ENCODE measurements at regions of chr7 and their contacts with region 1.

Region 1: GRCh38 chr7:332646-333392 is 42.8 kb downstream of the FOXL3 start:
- DNase-seq: peak; percentile 94
- H3K4me3 Mint-ChIP-seq: no peak overlapping the region
- H3K27ac Mint-ChIP-seq: no peak overlapping the region
- H3K4me1 Mint-ChIP-seq: peaks cover 7% of the 10 kb centered on the region
- H3K27me3 Mint-ChIP-seq: no peaks in the 10 kb centered on the region

Region 2: DNA sequence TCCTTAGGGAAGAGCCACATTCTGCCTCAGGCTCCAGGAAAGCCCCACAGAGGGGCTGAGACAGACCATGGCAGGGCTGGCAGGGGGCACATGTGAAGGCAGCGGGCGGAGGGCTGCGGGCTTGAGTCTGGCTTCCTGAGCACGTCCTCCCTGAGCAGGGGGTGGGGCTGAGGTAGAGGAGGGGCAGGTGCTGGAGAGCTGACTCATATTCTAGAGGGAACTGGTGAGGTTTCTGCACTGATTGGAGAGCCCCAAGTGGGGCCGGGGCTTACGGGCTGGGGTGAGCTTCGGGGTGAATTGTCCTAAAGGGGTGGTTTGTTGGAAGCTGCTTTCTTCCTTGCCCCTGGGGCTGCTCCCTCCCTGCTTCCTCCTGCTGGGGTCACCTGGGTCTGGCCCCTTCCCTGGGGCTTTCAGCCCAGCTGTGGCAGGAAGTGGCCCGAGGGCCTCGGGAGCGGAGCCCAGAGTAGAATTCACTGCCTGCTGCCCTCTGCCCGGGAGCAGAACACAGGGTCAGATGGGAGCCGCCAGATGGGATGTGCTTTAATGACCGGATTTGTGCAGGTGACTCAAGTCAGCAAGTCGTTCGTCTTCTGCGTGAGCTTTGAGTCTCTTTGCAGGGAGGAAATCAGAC is 91.9 kb before region 1 on chr7:
- CTCF ChIA-PET with region 1: no interaction called
- intact Hi-C with region 1: no loop called
- DNase-seq: peak; percentile 58
- H3K4me3 Mint-ChIP-seq: no peak overlapping the region
- H3K27ac Mint-ChIP-seq: no peak overlapping the region
- H3K4me1 Mint-ChIP-seq: no peaks in the 10 kb centered on the region
- H3K27me3 Mint-ChIP-seq: no peaks in the 10 kb centered on the region

Region 3: GRCh38 chr7:455110-455928 is 122.5 kb after region 1 on chr7:
- CTCF ChIA-PET with region 1: no interaction called
- intact Hi-C with region 1: no loop called
- DNase-seq: no peak
- H3K4me3 Mint-ChIP-seq: no peak overlapping the region
- H3K27ac Mint-ChIP-seq: no peak overlapping the region
- H3K4me1 Mint-ChIP-seq: peaks cover 16% of the 10 kb centered on the region
- H3K27me3 Mint-ChIP-seq: peaks cover 8% of the 10 kb centered on the region

Region 4: DNA sequence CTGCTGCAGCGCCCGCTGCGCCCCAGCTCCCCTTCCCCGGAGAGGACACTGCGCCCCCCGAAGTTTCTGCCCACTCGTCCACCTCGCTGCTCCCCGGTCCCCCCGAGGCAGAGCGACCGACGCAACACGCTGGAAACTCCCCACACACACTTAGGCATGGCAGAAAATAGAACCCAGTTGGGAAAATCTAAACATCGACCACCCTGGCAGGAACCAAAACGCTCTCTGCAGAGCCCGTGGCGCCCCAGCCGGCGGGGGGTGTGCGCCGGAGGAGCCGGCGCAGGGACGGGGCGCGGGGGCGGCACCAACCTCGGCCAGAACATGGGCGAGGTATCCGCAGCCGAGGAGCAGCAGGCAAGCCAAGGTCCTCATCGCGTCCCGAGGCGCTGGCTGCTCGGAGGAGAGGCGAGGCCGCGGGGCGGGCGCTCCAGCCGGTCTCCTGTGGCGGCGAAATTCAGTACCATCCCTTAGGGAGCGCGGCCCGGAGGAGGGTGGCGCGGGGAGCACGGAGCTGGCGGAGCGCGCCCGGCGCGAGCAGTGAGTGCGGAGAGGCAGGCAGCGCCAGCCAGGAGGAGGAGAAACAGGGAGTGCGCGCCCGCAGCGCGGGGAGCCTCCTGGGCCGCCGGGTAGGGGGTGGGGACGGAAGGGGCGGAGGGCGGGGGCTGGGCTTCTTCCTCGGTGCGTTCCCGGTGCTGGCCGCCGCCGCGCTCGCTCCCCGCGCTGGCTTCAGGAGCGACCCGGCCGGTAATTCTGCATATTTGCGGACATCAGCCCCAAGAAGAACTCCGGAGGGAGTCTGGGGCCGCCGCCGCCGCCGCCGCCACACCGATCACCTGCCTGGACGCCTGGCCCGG is 186.0 kb after region 1 on chr7:
- CTCF ChIA-PET with region 1: interaction called, 3 read pairs
- intact Hi-C with region 1: loop called (anchors 2 kb)
- DNase-seq: peak; percentile 75
- H3K4me3 Mint-ChIP-seq: peak overlapping the region; percentile 81
- H3K27ac Mint-ChIP-seq: no peak overlapping the region
- H3K4me1 Mint-ChIP-seq: peaks cover 20% of the 10 kb centered on the region
- H3K27me3 Mint-ChIP-seq: peaks cover 33% of the 10 kb centered on the region

Region 5: DNA sequence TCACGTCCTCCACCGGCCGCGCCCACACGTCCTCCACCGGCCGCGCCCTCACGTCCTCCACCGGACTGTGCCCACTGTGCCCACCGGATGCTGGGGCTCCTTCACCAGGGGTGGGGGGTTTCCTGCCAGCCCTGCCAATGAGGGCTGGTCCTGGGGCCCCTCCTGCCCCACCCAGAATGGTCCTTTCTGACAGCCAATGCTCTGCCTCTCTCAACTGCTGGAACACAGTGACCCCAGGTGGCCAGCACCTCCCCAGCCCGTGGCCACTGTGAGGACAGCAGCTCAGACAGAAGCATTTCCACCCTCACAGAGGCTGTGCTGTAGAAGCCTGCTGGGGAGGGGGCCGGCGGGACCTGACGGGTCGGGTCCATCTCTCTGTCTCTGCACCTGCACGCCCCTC is 303.6 kb after region 1 on chr7:
- CTCF ChIA-PET with region 1: interaction called, 8 read pairs
- intact Hi-C with region 1: loop called (anchors 1 kb)
- DNase-seq: peak; percentile 73
- H3K4me3 Mint-ChIP-seq: no peak overlapping the region
- H3K27ac Mint-ChIP-seq: no peak overlapping the region
- H3K4me1 Mint-ChIP-seq: peaks cover 21% of the 10 kb centered on the region
- H3K27me3 Mint-ChIP-seq: no peaks in the 10 kb centered on the region

Region 6: GRCh38 chr7:732094-732541 is 399.3 kb after region 1 on chr7:
- CTCF ChIA-PET with region 1: interaction called, 4 read pairs
- intact Hi-C with region 1: loop called (anchors 5 kb)
- DNase-seq: peak; percentile 42
- H3K4me3 Mint-ChIP-seq: no peak overlapping the region
- H3K27ac Mint-ChIP-seq: no peak overlapping the region
- H3K4me1 Mint-ChIP-seq: peaks cover 13% of the 10 kb centered on the region
- H3K27me3 Mint-ChIP-seq: no peaks in the 10 kb centered on the region

Region 7: DNA sequence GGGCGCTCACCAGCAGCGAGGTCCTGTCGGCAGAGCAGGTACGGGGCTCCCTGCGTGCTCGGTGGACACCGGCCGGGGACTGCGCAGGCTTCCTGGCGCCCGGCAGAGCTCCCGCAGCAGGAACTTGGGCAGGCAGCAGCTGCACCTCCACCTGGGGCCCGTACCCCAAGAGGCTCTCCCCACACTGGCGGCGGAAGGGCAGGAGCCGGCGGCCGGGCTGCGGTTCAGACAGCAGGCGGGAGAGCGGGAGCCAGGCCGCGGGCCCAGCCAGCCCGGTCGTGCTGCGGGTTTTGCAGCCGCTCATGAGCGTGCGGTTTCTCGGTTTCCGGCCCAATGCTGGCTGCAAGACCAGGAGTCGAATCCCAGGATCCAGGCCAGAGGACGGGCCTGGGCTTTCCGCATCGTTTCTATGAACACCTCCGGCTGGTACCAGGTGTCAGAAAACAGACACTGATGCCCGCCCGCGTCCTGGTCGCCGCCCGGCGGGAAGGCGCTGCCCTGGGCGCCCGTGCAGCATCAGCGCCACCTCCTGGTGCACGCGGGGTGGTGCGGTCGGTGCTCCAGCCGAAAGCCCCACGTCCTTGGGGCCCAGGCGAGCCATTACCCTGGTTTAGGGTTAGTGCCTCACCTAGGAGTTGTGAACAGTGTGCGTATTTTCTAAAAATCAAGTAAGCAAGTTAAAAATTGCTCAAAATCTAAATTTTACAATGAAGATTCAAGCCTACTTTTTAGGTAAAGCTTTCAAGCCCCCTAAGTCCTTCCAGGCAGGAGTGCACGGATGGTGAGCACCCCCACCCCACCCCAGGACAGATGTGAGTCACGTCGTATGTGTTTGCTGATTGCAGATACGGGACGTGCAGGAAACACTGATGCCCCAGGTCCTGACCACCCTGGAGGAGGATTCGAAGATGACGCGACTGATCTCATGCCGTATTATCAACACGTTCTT is 441.6 kb after region 1 on chr7:
- CTCF ChIA-PET with region 1: interaction called, 5 read pairs
- intact Hi-C with region 1: loop called (anchors 1 kb)
- DNase-seq: peak; percentile 64
- H3K4me3 Mint-ChIP-seq: no peak overlapping the region
- H3K27ac Mint-ChIP-seq: no peak overlapping the region
- H3K4me1 Mint-ChIP-seq: no peaks in the 10 kb centered on the region
- H3K27me3 Mint-ChIP-seq: no peaks in the 10 kb centered on the region